CD4-positive, alpha-beta memory T cell (primary cell): ENCODE measurements at regions of chr4 and their contacts with region 1.

Region 1: DNA sequence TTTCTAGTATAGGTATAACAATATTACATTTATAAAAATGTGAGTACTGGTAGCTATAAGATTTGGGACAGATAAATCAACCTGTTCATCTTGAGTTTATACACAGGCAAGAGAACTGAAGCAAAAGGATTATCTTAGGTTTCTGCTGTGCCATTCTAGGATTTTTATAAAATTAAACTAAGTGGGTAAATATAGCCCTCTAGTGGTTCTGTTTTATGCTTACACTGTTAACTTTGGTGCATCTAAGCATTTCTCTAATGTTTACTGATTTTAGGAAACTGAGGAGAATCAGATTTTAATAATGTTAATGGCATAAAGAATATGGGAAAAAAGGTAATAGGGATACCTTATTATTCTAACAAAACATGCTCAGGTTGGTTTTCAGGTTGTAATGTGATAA is 1.1 kb upstream of the RRH start:
- DNase-seq: peak in 3 of 5 donors; percentile 23 to 37 (median 27)
- H3K4me3 ChIP-seq: no peak overlapping the region
- H3K4me3 Mint-ChIP-seq: no peak overlapping the region
- H3K27ac ChIP-seq: no peak overlapping the region
- H3K27ac Mint-ChIP-seq: no peak overlapping the region
- H3K4me1 ChIP-seq: no peaks in the 10 kb centered on the region
- H3K4me1 Mint-ChIP-seq: peaks cover 0 to 4% (median under 1%) of the 10 kb centered on the region in 4 donors
- H3K27me3 ChIP-seq: no peaks in the 10 kb centered on the region
- H3K27me3 Mint-ChIP-seq: no peaks in the 10 kb centered on the region

Region 2: GRCh38 chr4:109424093-109424841 is 402.5 kb before region 1 on chr4:
- CTCF ChIA-PET with region 1: interaction called, 61 read pairs
- POLR2A ChIA-PET with region 1: no interaction called
- intact Hi-C with region 1: loop called (anchors 1 kb)
- DNase-seq: no peak
- H3K4me3 ChIP-seq: no peak overlapping the region
- H3K4me3 Mint-ChIP-seq: no peak overlapping the region
- H3K27ac ChIP-seq: no peak overlapping the region
- H3K27ac Mint-ChIP-seq: no peak overlapping the region
- H3K4me1 ChIP-seq: peaks cover 3% of the 10 kb centered on the region
- H3K4me1 Mint-ChIP-seq: peaks cover 0 to 4% (median 3%) of the 10 kb centered on the region in 4 donors
- H3K27me3 ChIP-seq: no peaks in the 10 kb centered on the region
- H3K27me3 Mint-ChIP-seq: peaks cover 0 to 3% of the 10 kb centered on the region in 2 donors

Region 3: DNA sequence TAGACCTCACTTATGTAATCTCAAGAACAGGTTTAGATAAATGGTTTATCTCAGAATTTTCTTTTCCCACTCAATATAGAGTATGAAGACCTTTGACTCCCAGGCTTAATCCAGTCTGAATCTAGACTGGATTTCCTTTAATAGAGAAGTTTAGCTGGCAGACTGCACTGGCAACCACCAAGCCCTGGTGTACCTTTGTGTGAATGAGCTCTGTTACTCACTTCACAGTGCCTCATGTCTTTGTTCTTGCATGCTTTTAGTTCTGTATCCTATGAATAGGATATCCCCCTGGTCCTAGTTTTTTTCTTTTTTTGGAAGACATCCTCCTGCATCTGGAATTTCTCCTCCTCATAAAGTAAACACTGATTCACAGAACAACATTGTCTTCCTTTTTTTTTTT is 319.8 kb before region 1 on chr4:
- CTCF ChIA-PET with region 1: no interaction called
- POLR2A ChIA-PET with region 1: no interaction called
- intact Hi-C with region 1: loop called (anchors 10 kb)
- DNase-seq: no peak
- H3K4me3 ChIP-seq: no peak overlapping the region
- H3K4me3 Mint-ChIP-seq: no peak overlapping the region
- H3K27ac ChIP-seq: no peak overlapping the region
- H3K27ac Mint-ChIP-seq: peak overlapping the region in 2 of 7 donors; percentile 23 to 66
- H3K4me1 ChIP-seq: no peaks in the 10 kb centered on the region
- H3K4me1 Mint-ChIP-seq: peaks cover 0 to 7% (median 3%) of the 10 kb centered on the region in 4 donors
- H3K27me3 ChIP-seq: no peaks in the 10 kb centered on the region
- H3K27me3 Mint-ChIP-seq: no peaks in the 10 kb centered on the region

Region 4: DNA sequence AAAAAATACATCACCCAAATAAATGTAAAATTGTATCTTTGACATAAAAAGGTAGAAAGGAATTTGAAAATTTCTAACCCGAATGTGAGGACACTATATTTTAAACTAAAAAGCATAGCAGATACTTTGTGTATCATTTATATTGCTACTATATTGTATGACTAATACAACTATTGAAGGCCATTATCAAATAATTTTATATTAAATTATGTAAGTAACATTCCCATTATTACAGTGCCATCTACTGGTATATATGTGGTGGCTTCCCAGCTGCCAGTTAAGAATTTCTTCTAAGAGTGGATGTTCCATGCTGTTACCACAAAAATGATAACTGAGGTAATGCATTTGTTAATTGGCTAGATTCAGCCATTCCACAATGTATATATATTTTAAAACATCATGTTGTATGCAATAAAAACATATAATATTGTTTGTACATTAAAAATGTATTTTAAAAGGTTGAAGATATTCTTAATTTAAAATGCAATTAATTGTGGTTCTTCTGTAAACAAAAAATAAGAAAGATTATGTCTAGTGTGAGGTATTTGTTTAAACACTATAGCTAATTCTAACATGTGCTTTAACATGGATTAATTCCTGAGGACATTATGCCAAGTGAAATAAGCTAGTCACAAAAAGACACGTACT is 151.3 kb after region 1 on chr4:
- CTCF ChIA-PET with region 1: interaction called, 3 read pairs
- POLR2A ChIA-PET with region 1: no interaction called
- intact Hi-C with region 1: loop called (anchors 10 kb)
- DNase-seq: peak in 4 of 5 donors; percentile 18 to 26 (median 22)
- H3K4me3 ChIP-seq: no peak overlapping the region
- H3K4me3 Mint-ChIP-seq: no peak overlapping the region
- H3K27ac ChIP-seq: no peak overlapping the region
- H3K27ac Mint-ChIP-seq: no peak overlapping the region
- H3K4me1 ChIP-seq: no peaks in the 10 kb centered on the region
- H3K4me1 Mint-ChIP-seq: no peaks in the 10 kb centered on the region
- H3K27me3 ChIP-seq: no peaks in the 10 kb centered on the region
- H3K27me3 Mint-ChIP-seq: peaks cover 14 to 24% of the 10 kb centered on the region in 2 donors